K562 (cell line): ENCODE measurements at regions of chr3 and their contacts with region 1.

Region 1: GRCh38 chr3:180802837-180803236 is 109.6 kb upstream of the FXR1 start:
- DNase-seq: peak in 2 of 4 experiments; percentile 14 to 15
- ATAC-seq: peak; percentile 69; the same call in 2 of the 3 replicates
- H3K4me3 ChIP-seq: no peak overlapping the region
- H3K27ac ChIP-seq: no peak overlapping the region
- H3K4me1 ChIP-seq: no peaks in the 10 kb centered on the region
- H3K27me3 ChIP-seq: no peaks in the 10 kb centered on the region
- CTCF ChIP-seq: peak; percentile 36 to 64 (median 38); a peak in 4 of 6 replicates
- EP300 ChIP-seq: no peak
- POLR2A ChIP-seq: no peak
- RAD21 ChIP-seq: peak; percentile 61 to 63

Region 2: DNA sequence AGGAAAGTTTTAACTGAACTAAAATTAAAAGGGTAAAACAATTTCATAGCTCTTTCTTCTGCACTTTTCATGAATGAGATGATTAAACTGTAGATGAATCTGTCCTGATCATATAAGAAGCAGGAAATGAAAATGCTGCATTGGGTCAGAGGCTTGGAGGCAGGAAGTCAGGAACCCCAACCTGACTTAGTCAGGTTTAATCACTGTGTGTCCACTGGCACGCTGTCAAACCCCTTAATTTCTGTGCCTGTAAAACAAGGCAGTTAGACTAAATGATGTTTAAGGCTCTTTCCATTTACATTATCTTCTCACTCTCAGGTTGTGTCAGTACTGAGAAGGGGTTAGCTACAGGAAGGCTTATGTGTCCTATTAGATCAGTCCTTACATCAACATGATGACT is 394.2 kb before region 1 on chr3:
- CTCF ChIA-PET with region 1: no interaction called
- POLR2A ChIA-PET with region 1: no interaction called
- in situ Hi-C with region 1: no loop called
- intact Hi-C with region 1: no loop called
- DNase-seq: no peak
- ATAC-seq: no peak
- H3K4me3 ChIP-seq: no peak overlapping the region
- H3K27ac ChIP-seq: no peak overlapping the region
- H3K4me1 ChIP-seq: no peaks in the 10 kb centered on the region
- H3K27me3 ChIP-seq: no peaks in the 10 kb centered on the region
- CTCF ChIP-seq: no peak
- EP300 ChIP-seq: no peak
- POLR2A ChIP-seq: no peak
- RAD21 ChIP-seq: no peak

Region 3: DNA sequence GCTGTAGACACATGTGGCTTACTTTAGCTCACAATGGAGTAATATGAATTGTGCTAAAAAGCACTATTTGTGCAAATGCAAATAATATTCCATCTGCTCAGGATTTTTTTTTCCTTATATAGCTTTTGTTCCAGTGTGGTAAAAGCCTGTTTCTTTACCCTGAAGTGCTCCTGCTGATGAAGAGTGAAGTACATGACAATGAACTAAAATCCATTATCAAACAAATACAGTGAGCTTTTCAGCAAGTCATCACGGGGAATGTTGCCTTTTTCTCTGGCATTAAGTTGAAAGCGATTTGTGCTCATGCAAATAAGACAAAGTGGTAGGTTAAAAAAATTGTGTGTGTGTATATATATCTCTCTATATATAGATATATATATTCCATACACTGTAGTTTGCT is 94.9 kb before region 1 on chr3:
- CTCF ChIA-PET with region 1: no interaction called
- POLR2A ChIA-PET with region 1: no interaction called
- in situ Hi-C with region 1: no loop called
- intact Hi-C with region 1: no loop called
- DNase-seq: no peak
- ATAC-seq: no peak
- H3K4me3 ChIP-seq: no peak overlapping the region
- H3K27ac ChIP-seq: no peak overlapping the region
- H3K4me1 ChIP-seq: no peaks in the 10 kb centered on the region
- H3K27me3 ChIP-seq: no peaks in the 10 kb centered on the region
- CTCF ChIP-seq: no peak
- EP300 ChIP-seq: no peak
- POLR2A ChIP-seq: no peak
- RAD21 ChIP-seq: no peak

Region 4: DNA sequence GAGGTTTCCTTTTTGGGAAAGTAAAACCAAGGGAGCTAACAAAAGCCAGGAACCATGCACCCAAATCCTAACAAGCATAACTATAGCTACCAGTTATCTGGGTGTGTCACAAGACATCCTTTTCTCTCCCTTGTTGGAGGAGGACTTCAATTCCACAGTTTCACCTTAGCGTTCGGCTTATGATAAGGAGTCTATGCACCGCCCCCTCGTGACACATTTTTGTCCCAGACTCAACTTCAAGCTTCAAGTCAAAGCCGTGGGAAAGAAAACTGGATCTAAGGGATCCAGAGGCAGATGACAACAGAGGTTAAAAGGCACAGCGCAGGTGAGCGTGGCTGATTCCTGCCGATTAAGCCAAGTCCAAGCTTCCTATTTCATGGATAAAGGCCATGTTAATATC is 95.7 kb after region 1 on chr3:
- CTCF ChIA-PET with region 1: no interaction called
- POLR2A ChIA-PET with region 1: no interaction called
- in situ Hi-C with region 1: no loop called
- intact Hi-C with region 1: loop called (anchors 2 kb)
- DNase-seq: peak in 1 of 4 experiments; percentile 31
- ATAC-seq: peak; percentile 48; the same call in 1 of the 3 replicates
- H3K4me3 ChIP-seq: no peak overlapping the region
- H3K27ac ChIP-seq: no peak overlapping the region
- H3K4me1 ChIP-seq: no peaks in the 10 kb centered on the region; a peak in 1 of 5 replicates
- H3K27me3 ChIP-seq: no peaks in the 10 kb centered on the region
- CTCF ChIP-seq: no peak
- EP300 ChIP-seq: no peak
- POLR2A ChIP-seq: no peak
- RAD21 ChIP-seq: no peak

Region 5: GRCh38 chr3:180989291-180990163 is 186.7 kb after region 1 on chr3 and contains the start of gene DNAJC19:
- CTCF ChIA-PET with region 1: no interaction called
- POLR2A ChIA-PET with region 1: no interaction called
- in situ Hi-C with region 1: no loop called
- intact Hi-C with region 1: loop called (anchors 10 kb)
- DNase-seq: peak; percentile 88 to 97 (median 89)
- ATAC-seq: peak; percentile 96
- H3K4me3 ChIP-seq: peak within 1 kb of the TSS; percentile 94
- H3K27ac ChIP-seq: peak within 1 kb of the TSS; percentile 82
- H3K4me1 ChIP-seq: peaks cover 2 to 11% of the 10 kb centered on the region in 2 experiments; a peak in 3 of 5 replicates
- H3K27me3 ChIP-seq: no peaks in the 10 kb centered on the region; a peak in 1 of 5 replicates
- CTCF ChIP-seq: no peak
- EP300 ChIP-seq: no peak
- POLR2A ChIP-seq: peak; percentile 93
- RAD21 ChIP-seq: no peak
- polyA plus RNA-seq, gene DNAJC19: 116 to 136 TPM

Region 6: DNA sequence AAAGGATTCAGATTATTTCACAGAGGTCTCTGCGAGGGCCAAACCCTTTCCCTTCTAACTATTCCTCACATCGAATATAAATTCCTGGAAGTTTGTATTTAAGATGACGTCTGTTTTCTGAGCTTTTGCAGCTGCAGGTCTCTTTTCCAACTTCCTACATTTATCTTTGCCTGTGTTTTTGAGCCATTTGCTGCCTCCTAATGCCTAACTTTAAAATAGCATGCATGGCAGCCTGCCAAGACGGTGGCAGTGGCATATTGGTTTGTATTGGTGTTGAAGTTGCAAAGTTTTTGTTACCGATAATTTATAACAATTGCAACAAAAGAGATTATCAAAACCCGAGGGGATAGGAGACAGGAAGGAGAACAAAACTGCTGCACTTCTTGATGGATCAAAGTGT is 373.8 kb after region 1 on chr3:
- CTCF ChIA-PET with region 1: no interaction called
- POLR2A ChIA-PET with region 1: no interaction called
- in situ Hi-C with region 1: no loop called
- intact Hi-C with region 1: loop called (anchors 2 kb)
- DNase-seq: peak in 3 of 4 experiments; percentile 4 to 30 (median 10)
- ATAC-seq: no peak
- H3K4me3 ChIP-seq: no peak overlapping the region
- H3K27ac ChIP-seq: no peak overlapping the region
- H3K4me1 ChIP-seq: no peaks in the 10 kb centered on the region
- H3K27me3 ChIP-seq: no peaks in the 10 kb centered on the region
- CTCF ChIP-seq: peak in 2 of 3 experiments; percentile 28 to 37; a peak in 2 of 6 replicates
- EP300 ChIP-seq: no peak
- POLR2A ChIP-seq: no peak
- RAD21 ChIP-seq: peak; percentile 32 to 57; a peak in 2 of 4 replicates

Region 7: DNA sequence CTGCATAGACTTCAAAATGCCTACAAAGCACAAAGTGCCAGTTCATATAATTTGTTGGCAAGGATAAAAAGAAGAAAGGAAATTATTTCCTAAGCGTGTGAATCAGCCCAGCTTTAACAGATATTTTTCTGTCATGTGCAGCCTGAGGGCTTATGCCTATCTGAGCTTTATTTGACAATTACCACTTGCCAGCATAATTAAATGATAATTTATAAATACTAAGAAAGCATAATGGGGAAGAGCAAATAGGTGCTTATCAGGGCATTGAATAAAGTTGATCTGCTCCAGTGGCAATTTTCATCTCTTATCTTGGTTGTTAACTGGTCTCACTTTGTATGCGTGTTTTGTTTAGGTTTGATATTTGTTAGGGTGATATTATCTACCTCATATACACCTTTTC is 500.1 kb after region 1 on chr3:
- CTCF ChIA-PET with region 1: no interaction called
- POLR2A ChIA-PET with region 1: no interaction called
- in situ Hi-C with region 1: no loop called
- intact Hi-C with region 1: no loop called
- DNase-seq: no peak
- ATAC-seq: no peak
- H3K4me3 ChIP-seq: no peak overlapping the region
- H3K27ac ChIP-seq: no peak overlapping the region
- H3K4me1 ChIP-seq: no peaks in the 10 kb centered on the region
- H3K27me3 ChIP-seq: no peaks in the 10 kb centered on the region
- CTCF ChIP-seq: no peak
- EP300 ChIP-seq: no peak
- POLR2A ChIP-seq: no peak
- RAD21 ChIP-seq: no peak

Region 8: GRCh38 chr3:182683453-182683852 is 1880.6 kb after region 1 on chr3:
- CTCF ChIA-PET with region 1: no interaction called
- POLR2A ChIA-PET with region 1: no interaction called
- in situ Hi-C with region 1: loop called (anchors 25 kb)
- intact Hi-C with region 1: loop called (anchors 10 kb)
- DNase-seq: peak; percentile 67 to 79 (median 69)
- ATAC-seq: peak; percentile 84
- H3K4me3 ChIP-seq: no peak overlapping the region
- H3K27ac ChIP-seq: no peak overlapping the region
- H3K4me1 ChIP-seq: peaks cover 0 to 10% of the 10 kb centered on the region in 2 experiments; a peak in 2 of 5 replicates
- H3K27me3 ChIP-seq: 0 out of 5 replicates have a peak, but pooled peaks cover 0 to 4% of the 10 kb centered on the region in 2 experiments
- CTCF ChIP-seq: peak; percentile 81 to 96 (median 91)
- EP300 ChIP-seq: no peak
- POLR2A ChIP-seq: no peak
- RAD21 ChIP-seq: peak; percentile 85 to 93